ENCODE measurements at regions of chr18 and their contacts with region 1.

Region 1: DNA sequence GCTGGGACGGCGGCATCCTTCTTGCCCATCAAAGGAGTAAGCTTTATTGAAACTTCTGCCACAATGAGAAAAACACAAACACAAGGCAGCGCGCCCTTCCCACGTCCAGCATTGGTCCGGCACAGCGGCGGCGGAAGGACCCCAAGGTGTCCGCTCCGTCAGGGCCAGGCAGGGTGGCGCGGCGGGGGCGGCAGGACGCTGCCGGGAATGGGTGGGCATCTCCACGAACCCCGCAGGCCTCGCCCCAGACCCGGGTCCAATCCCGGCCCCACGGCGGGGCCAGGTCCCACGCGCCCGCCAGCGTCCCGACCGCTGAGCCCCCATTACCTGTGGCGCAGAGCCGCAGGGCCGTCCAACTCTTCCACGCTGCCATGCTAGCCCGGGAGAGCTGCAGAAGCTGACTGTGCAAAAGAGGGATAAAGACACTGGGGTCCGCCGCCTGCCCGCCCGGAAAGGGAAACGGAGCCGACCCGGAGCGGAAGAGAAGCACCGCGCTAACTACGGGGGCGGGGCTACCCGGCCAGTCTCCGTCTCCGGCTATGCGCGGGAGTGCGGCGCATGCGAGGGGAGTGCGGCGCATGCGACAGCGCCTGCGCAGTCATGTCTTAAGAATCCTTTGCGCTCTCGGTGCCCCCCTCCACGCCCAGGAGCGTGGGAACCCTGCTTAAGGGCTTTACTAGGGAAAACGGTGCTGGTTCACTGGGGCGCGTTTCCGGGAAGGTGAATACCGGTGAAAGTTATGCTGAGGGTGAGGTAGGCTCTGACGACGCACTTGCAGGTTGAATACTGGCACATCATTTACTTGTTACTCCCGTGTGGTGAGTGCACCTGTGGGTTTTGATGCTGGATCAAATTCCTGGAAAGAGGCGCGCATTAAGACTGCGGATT is at the start of gene TMX3:
- DNase-seq: peak; percentile 94
- ATAC-seq: peak; percentile 98
- H3K4me3 ChIP-seq: peak within 1 kb of the TSS; percentile 85 to 93 (median 87)
- H3K4me3 Mint-ChIP-seq: peak within 1 kb of the TSS; percentile 98
- H3K27ac ChIP-seq: peak within 1 kb of the TSS; percentile 42 to 84
- H3K27ac Mint-ChIP-seq: peak within 1 kb of the TSS; percentile 91
- H3K4me1 ChIP-seq: peaks cover 18 to 23% of the 10 kb centered on the region in 2 donors
- H3K4me1 Mint-ChIP-seq: peaks cover 40% of the 10 kb centered on the region
- H3K27me3 ChIP-seq: no peaks in the 10 kb centered on the region
- H3K27me3 Mint-ChIP-seq: no peaks in the 10 kb centered on the region
- CTCF ChIP-seq: no peak
- total RNA-seq, gene TMX3: 72.4 and 73.5 TPM in 2 replicates

Region 2: DNA sequence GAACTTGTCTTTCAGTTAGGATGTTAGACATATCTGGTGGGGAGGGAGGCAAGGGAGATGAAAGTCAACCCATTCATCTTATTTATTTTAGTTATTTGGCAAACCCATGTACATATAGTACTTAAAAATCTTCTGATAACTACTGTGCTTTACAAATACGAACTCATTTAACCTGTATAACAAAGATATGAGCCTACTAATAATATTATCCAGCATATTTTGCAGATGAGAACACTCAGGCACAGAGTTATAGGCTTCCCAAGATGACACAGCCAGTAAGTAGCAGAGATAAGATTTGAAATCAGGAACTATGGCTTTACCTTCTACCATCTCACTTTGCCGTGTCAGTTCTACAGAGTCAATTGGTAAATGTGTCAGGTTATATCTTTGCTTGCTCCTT is 423.2 kb after region 1 on chr18:
- CTCF ChIA-PET with region 1: no interaction called
- POLR2A ChIA-PET with region 1: no interaction called
- intact Hi-C with region 1: no loop called
- DNase-seq: no peak
- ATAC-seq: no peak
- H3K4me3 ChIP-seq: no peak overlapping the region
- H3K4me3 Mint-ChIP-seq: no peak overlapping the region
- H3K27ac ChIP-seq: no peak overlapping the region
- H3K27ac Mint-ChIP-seq: no peak overlapping the region
- H3K4me1 ChIP-seq: no peaks in the 10 kb centered on the region
- H3K4me1 Mint-ChIP-seq: no peaks in the 10 kb centered on the region
- H3K27me3 ChIP-seq: no peaks in the 10 kb centered on the region
- H3K27me3 Mint-ChIP-seq: no peaks in the 10 kb centered on the region
- CTCF ChIP-seq: no peak

Region 3: DNA sequence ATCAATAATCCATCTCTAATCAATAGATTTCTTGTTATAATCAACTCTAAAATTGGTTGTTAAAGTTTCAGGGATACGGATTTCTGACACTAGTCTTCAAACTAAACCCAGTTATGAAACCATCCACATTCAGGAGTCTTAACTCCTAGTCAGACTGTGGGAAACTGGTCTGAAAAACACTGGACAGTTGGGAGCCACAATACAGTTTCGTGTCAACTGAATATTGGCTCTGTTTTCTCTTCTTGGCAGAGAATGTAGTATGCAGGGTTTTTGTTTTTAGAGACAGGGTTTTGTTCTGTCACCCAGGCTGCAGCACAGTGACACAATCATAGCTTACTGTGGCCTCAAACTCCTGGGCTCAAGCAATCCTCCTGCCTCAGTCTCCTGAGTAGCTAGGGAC is 1367.6 kb after region 1 on chr18:
- CTCF ChIA-PET with region 1: no interaction called
- POLR2A ChIA-PET with region 1: no interaction called
- intact Hi-C with region 1: loop called (anchors 10 kb)
- DNase-seq: no peak
- ATAC-seq: no peak
- H3K4me3 ChIP-seq: no peak overlapping the region
- H3K4me3 Mint-ChIP-seq: no peak overlapping the region
- H3K27ac ChIP-seq: no peak overlapping the region
- H3K27ac Mint-ChIP-seq: no peak overlapping the region
- H3K4me1 ChIP-seq: no peaks in the 10 kb centered on the region
- H3K4me1 Mint-ChIP-seq: no peaks in the 10 kb centered on the region
- H3K27me3 ChIP-seq: no peaks in the 10 kb centered on the region
- H3K27me3 Mint-ChIP-seq: no peaks in the 10 kb centered on the region
- CTCF ChIP-seq: no peak

Region 4: DNA sequence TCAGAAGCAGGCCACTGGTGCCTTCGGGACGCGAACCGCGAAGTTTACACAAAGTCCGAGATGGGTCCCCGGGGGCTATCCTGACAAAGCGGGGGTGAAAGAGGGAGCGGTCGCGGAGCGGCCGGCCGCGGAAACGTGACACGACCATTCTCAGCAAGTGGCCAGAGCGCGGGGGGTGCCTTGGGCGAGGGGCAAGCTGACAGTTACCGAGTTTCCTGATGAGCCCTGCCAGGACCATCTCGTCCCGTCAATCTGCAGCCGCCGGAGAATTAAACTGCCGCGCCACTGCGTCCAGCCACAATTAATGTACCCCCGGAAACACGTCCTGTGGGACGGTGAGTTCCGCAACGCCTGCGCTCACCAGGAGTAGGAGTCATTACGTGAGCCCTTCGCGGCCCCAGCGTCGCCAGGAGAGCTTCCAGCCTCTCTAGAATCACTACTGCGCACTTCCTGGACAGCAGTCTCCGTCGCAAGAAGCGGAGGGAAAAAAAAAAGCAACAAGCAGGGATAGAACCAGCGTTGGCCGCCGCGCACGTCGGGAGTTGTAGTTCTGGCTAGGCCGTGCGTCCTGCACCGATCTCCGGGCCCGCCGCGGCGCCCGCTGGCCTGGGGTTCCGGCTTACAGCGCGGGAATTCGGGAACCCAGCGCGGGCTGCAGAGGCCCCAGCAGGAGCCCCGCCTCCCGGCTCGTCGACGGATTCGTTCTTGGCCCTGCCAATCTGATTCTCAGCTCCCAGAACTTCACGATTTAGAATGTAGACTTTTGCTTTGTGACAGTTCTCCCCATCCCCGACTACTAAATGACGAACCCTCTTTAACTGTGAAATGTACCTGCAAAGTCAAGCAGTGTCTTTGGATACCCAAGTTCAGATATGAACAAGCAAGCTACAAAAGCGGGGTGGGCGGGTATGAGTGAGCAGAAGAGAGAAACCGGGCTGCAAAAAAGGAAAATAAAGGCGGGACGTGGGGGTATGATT is 1490.9 kb after region 1 on chr18 and contains the start of gene RTTN:
- CTCF ChIA-PET with region 1: no interaction called
- POLR2A ChIA-PET with region 1: no interaction called
- intact Hi-C with region 1: loop called (anchors 1 kb)
- DNase-seq: peak; percentile 95
- ATAC-seq: peak; percentile 94
- H3K4me3 ChIP-seq: peak within 1 kb of the TSS; percentile 65 to 90 (median 85)
- H3K4me3 Mint-ChIP-seq: peak within 1 kb of the TSS; percentile 89
- H3K27ac ChIP-seq: peak within 1 kb of the TSS; percentile 88 to 92
- H3K27ac Mint-ChIP-seq: peak within 1 kb of the TSS; percentile 99
- H3K4me1 ChIP-seq: peaks cover 7 to 12% of the 10 kb centered on the region in 2 donors
- H3K4me1 Mint-ChIP-seq: peaks cover 23% of the 10 kb centered on the region
- H3K27me3 ChIP-seq: peaks cover 0 to 3% (median 1%) of the 10 kb centered on the region in 4 experiments
- H3K27me3 Mint-ChIP-seq: no peaks in the 10 kb centered on the region
- CTCF ChIP-seq: no peak
- total RNA-seq, gene RTTN: 37.7 and 41.2 TPM in 2 replicates

Measured in B cell (primary cell).